Kidney (tissue), 22 donors: ENCODE measurements at regions of chr11 and their contacts with region 1.

Region 1: GRCh38 chr11:122796128-122796717 is 42.1 kb upstream of the CRTAM start:
- DNase-seq: peak in 2 of 5 donors; percentile 33 to 38
- H3K4me3 ChIP-seq: no peak overlapping the region
- H3K27ac ChIP-seq: no peak overlapping the region
- H3K4me1 ChIP-seq: no peaks in the 10 kb centered on the region
- H3K27me3 ChIP-seq: no peaks in the 10 kb centered on the region
- CTCF ChIP-seq: peak; percentile 89

Region 2: GRCh38 chr11:122681735-122682134 is 114.5 kb before region 1 on chr11:
- intact Hi-C with region 1: no loop called
- DNase-seq: no peak
- H3K4me3 ChIP-seq: no peak overlapping the region
- H3K27ac ChIP-seq: no peak overlapping the region
- H3K4me1 ChIP-seq: no peaks in the 10 kb centered on the region
- H3K27me3 ChIP-seq: no peaks in the 10 kb centered on the region
- CTCF ChIP-seq: no peak

Region 3: DNA sequence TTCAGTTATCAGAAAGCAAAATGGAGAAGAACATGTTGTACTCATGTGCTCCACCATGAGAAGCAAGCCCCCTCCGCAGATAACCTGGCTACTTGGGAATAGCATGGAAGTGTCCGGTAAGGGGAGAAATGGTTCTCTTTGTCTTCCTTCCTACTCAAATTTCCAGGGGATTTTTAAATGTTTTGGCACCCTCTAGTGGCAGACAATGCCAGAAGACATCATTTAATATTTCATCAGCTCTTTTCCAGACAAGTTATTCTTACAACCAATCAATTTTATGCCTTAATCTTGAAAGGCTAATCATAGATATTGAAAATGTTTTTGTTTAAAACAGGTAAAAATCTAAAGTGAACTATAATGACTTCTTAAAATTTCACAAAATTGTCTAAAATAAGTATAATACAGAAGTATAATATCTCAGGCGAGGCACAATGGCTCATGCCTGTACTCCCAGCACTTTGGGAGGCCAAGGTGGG is 57.8 kb after region 1 on chr11:
- intact Hi-C with region 1: loop called (anchors 10 kb)
- DNase-seq: peak in 4 of 5 donors; percentile 61 to 92 (median 78)
- H3K4me3 ChIP-seq: no peak overlapping the region
- H3K27ac ChIP-seq: no peak overlapping the region
- H3K4me1 ChIP-seq: no peaks in the 10 kb centered on the region
- H3K27me3 ChIP-seq: no peaks in the 10 kb centered on the region
- CTCF ChIP-seq: peak; percentile 82